ENCODE measurements at regions of chr3 and their contacts with region 1.

Region 1: DNA sequence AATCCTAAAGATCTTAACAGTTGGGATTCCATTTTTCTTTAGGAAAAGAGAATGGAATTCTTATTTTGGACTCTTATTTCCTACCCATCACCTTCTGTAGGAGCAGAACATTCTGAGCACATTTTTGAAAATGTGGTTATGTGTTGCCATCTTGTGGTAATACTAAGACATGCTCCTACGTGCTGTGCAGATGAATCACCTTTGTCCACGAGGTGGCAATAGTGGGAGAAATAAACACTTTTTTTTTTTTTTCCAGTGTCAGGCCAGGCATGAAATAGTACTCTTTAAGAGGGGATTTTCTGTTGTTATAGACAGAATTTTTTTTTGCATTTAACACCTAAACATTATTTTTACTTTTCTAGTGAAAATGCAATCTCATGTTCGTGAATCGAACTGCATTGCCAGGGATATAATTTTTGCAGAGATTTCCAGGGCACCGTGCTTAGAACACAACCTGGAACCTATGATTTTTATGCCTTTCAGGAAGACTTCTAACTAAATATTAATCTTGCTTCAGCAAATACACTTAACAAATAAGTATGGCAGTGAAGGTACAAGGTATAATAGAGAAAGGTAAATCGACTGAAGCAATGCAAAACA is 196.6 kb downstream of the GAP43 start:
- DNase-seq: peak; percentile 50
- ATAC-seq: peak; percentile 82

Region 2: GRCh38 chr3:113844622-113845222 is 1975.2 kb before region 1 on chr3:
- intact Hi-C with region 1: loop called (anchors 10 kb)
- DNase-seq: no peak
- ATAC-seq: no peak

Region 3: GRCh38 chr3:115986555-115987207 is 166.8 kb after region 1 on chr3:
- intact Hi-C with region 1: no loop called
- DNase-seq: no peak
- ATAC-seq: no peak